AG04449 (cell line): ENCODE measurements at regions of chr12 and their contacts with region 1.

Region 1: GRCh38 chr12:50314629-50315312 is 31.5 kb upstream of the LIMA1 start:
- DNase-seq: no peak
- H3K4me3 ChIP-seq: no peak overlapping the region
- CTCF ChIP-seq: peak; percentile 49

Region 2: GRCh38 chr12:50084775-50085614 is 229.8 kb before region 1 on chr12 and contains the start of gene SMARCD1:
- CTCF ChIA-PET with region 1: interaction called, 12 read pairs
- POLR2A ChIA-PET with region 1: interaction called, 3 read pairs
- DNase-seq: no peak
- H3K4me3 ChIP-seq: peak within 1 kb of the TSS; percentile 84
- CTCF ChIP-seq: peak; percentile 72

Region 3: DNA sequence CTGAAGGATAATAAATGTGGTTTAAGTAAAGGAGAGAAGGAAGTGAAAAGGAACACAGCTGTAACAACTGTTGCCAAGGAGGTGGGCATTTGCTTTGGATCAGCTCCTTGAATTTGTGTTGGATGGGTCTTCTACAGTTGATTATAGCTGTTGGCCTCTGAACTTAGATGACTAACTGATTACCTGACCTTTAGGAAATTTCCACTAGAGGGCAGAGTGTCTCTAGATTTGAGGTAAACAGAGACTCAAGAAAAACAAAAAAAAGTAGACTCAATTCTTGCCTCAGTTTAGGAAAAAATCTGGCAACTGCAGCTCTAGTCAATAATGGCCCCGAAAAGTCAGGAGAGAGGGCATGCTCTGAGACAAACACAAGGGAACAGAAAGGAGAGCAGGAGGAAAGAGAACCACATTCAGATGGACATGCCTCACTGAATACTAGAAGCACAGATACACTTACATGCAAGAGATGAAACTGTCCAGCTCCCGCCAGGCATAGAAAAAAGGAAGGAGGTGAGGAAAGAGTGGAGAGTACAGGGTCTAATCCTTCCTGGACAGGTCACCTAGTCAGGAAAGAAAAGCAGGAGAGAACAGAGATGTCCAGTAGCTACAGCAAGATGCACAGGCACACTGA is 182.2 kb before region 1 on chr12:
- CTCF ChIA-PET with region 1: interaction called, 12 read pairs
- POLR2A ChIA-PET with region 1: interaction called, 3 read pairs
- DNase-seq: no peak
- H3K4me3 ChIP-seq: no peak overlapping the region
- CTCF ChIP-seq: peak; percentile 20

Region 4: DNA sequence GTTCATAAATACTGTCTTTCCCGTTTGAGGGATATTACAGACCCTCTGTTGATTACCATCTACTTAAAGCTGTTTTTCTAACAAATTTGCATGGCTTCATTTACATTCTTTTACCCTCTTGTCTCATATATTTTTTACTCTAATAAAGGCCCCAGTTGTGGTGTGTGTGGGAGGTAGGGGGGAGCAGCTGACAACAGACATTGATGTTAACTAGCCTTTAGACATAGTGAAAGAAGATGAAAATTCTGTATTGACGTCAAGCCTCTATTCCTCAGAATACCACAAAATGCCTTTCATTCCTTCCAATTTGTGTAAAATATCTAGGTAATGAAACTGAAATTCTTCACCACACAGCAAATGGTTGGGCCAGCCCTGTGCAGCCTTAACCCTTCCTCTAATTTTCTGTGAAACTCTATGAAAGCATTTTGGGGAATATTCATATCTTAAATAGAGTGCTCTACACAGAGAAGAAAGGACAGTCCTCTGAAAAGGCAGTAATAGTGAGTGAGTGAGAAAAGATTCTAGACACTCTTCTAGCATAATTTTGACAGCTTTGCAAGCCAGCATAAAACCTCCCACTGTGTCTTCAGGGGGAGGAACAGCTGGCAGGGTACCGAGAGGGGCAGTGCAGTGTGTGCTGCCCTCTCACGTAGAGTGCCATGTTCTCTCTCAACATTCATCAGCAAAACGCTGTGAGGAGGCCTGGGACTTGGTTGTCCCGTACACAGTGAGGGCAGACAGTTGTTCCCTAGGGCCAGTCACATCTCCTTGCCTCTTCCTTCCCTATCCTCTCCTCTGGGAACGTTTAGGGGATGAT is 127.5 kb before region 1 on chr12:
- CTCF ChIA-PET with region 1: interaction called, 37 read pairs
- POLR2A ChIA-PET with region 1: interaction called, 5 read pairs
- DNase-seq: peak; percentile 91
- H3K4me3 ChIP-seq: no peak overlapping the region; the same call in 1 of the 2 replicates
- CTCF ChIP-seq: peak; percentile 14

Region 5: GRCh38 chr12:50211392-50212070 is 103.2 kb before region 1 on chr12:
- CTCF ChIA-PET with region 1: interaction called, 33 read pairs
- POLR2A ChIA-PET with region 1: interaction called, 3 read pairs
- DNase-seq: no peak
- H3K4me3 ChIP-seq: no peak overlapping the region
- CTCF ChIP-seq: no peak

Region 6: DNA sequence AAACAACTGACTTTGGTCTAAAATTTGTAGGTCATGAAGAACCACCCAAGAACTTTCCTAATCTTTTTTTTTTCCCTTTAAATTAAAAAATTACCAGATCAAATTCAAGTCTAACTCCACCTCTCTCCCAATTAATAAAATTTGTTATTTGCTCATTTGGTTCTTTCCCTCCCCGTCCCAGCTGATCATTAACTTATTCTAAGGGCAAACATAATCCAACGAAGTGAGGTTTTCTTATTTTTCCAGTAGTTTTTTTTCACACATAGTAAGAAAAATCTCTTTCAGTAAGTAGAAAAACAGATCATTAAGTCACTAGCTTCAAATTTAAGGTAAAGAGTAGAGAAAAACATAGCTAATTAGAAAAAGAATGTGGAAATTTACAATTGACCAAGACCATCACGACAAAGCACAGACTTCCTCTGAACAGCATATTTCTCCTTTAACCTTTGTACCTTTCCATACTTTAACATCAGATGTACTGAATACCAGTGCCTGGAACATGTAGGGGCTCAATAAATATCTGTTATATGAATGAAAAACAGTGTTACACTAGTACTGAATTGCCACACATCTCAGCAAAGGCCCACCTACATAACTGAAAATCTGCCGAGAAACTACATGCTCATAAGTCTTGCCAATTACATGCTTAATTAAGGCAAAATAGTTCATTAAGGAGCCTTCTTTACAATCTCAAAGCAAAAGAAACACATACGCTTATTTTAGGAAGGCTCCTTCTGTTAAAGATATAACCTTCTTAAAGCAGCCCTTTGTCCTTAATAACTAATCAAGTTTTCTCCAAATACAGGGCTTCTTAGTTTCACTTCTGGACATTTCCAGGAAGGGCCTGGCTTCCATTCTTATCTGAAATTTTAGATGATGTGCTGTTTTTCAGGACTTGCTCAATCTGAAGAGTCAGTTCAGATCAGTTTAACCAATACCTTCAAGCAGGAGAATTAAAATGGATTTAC is 43.2 kb before region 1 on chr12:
- CTCF ChIA-PET with region 1: no interaction called
- POLR2A ChIA-PET with region 1: no interaction called
- DNase-seq: no peak
- H3K4me3 ChIP-seq: no peak overlapping the region
- CTCF ChIP-seq: no peak

Region 7: DNA sequence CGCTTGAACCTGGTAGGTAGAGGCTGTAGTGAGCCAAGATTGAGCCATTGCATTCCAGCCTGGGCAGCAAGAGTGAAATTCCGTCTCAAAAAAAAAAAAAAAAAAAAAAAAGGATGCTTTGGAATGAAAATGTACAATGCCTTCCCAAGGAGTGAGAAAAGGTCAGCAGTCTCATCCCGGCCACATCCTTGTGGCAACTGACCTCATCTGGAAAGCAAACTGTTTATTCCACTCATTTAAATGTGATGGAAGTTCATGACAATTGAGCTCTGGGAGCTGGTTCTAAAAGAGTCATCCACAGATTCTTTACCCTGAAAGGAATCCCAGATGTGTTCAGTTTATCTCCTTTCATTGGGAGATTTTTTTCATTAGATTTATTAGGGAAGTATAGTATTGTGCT is 12.1 kb before region 1 on chr12:
- CTCF ChIA-PET with region 1: interaction called, 17 read pairs
- POLR2A ChIA-PET with region 1: no interaction called
- DNase-seq: no peak
- H3K4me3 ChIP-seq: no peak overlapping the region
- CTCF ChIP-seq: no peak

Region 8: GRCh38 chr12:50362671-50363070 is 47.9 kb after region 1 on chr12:
- CTCF ChIA-PET with region 1: no interaction called
- POLR2A ChIA-PET with region 1: no interaction called
- DNase-seq: no peak
- H3K4me3 ChIP-seq: no peak overlapping the region
- CTCF ChIP-seq: no peak

Region 9: DNA sequence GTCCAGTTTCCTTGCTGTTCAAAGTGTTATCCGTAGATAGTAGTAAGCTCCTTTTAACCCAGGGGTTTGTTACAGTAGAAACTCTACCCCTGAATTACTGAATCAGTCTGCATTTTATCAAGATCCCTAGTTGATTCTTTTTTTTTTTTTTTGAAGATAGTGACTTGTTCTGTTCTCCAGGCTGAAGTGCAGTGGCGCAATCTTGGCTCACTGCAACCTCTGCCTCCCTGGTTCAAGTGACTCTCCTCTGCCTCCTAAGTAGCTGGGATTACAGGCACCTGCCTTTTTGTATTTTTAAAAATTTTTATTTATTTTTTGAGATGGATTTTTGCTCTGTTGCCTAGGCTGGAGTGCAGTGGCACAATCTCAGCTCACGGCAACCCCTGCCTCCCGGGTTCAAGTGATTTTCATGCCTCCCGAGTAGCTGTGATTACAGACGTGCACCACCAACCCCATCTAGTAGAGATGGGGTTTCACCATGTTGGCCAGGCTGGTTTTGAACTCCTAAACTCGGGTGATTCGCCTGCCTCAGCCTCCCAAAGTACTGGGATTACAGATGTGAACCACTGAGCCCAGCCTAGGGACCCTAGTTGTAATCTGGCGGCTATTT is 96.4 kb after region 1 on chr12:
- CTCF ChIA-PET with region 1: no interaction called
- POLR2A ChIA-PET with region 1: no interaction called
- DNase-seq: no peak
- H3K4me3 ChIP-seq: no peak overlapping the region
- CTCF ChIP-seq: no peak